Activated B cell treated with CpG ODN at 0.5 μM for 24 hours (primary cell): ENCODE measurements at regions of chr18 and their contacts with region 1.

Region 1: DNA sequence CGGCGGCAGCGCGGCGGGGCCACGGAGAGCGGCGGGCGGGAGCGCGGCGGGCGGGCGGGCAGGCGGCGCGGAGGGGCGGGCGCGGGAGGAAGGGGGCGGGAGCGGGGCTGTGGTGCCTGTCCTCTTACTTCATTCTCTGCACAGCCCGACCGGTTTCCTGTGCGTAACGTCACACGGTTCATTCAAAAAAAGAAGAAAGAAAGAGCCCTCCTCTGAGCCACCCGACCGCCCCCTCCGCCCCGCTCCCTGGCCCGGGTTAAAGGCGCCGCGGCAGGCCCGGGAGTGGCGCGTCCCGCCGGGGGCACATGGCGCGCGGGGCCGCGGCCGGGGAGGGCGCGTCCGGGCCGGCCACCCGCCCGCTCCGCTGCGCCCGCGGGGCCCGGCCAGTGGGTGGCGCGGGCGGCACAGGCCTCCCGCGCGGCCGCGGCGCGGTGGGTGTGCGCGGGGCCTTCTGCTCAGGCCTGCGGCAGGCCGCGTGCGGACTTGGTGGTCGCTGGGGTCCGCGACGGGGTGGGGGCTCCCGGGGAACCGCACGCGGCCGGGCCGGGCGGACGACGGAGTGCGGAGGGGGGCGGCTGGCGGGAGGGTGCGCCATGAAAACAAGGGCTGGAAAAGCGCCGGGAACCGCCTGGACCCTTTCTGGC is 599 bp upstream of the BCL2 start:
- DNase-seq: peak; percentile 78
- ATAC-seq: peak; percentile 77
- H3K4me3 Mint-ChIP-seq: peak overlapping the region; percentile 87
- H3K27ac Mint-ChIP-seq: peak overlapping the region; percentile 85
- H3K4me1 Mint-ChIP-seq: peaks cover 49% of the 10 kb centered on the region
- H3K27me3 Mint-ChIP-seq: no peaks in the 10 kb centered on the region
- CTCF ChIP-seq: no peak

Region 2: GRCh38 chr18:63016270-63016669 is 303.9 kb before region 1 on chr18:
- CTCF ChIA-PET with region 1: interaction called, 166 read pairs
- POLR2A ChIA-PET with region 1: interaction called, 15 read pairs
- intact Hi-C with region 1: loop called (anchors 1 kb)
- DNase-seq: no peak
- ATAC-seq: peak; percentile 75
- H3K4me3 Mint-ChIP-seq: no peak overlapping the region
- H3K27ac Mint-ChIP-seq: no peak overlapping the region
- H3K4me1 Mint-ChIP-seq: no peaks in the 10 kb centered on the region
- H3K27me3 Mint-ChIP-seq: peaks cover 13% of the 10 kb centered on the region
- CTCF ChIP-seq: no peak

Region 3: GRCh38 chr18:63131106-63131958 is 188.8 kb before region 1 on chr18:
- CTCF ChIA-PET with region 1: interaction called, 80 read pairs
- POLR2A ChIA-PET with region 1: interaction called, 46 read pairs
- intact Hi-C with region 1: loop called (anchors 1 kb)
- DNase-seq: no peak
- ATAC-seq: peak; percentile 65
- H3K4me3 Mint-ChIP-seq: no peak overlapping the region
- H3K27ac Mint-ChIP-seq: peak overlapping the region; percentile 70
- H3K4me1 Mint-ChIP-seq: peaks cover 35% of the 10 kb centered on the region
- H3K27me3 Mint-ChIP-seq: no peaks in the 10 kb centered on the region
- CTCF ChIP-seq: no peak

Region 4: GRCh38 chr18:63161761-63162195 is 158.4 kb before region 1 on chr18:
- CTCF ChIA-PET with region 1: interaction called, 33 read pairs
- POLR2A ChIA-PET with region 1: interaction called, 162 read pairs
- intact Hi-C with region 1: loop called (anchors 1 kb)
- DNase-seq: peak; percentile 48
- ATAC-seq: peak; percentile 62
- H3K4me3 Mint-ChIP-seq: peak overlapping the region; percentile 84
- H3K27ac Mint-ChIP-seq: peak overlapping the region; percentile 99
- H3K4me1 Mint-ChIP-seq: peaks cover 91% of the 10 kb centered on the region
- H3K27me3 Mint-ChIP-seq: no peaks in the 10 kb centered on the region
- CTCF ChIP-seq: no peak

Region 5: DNA sequence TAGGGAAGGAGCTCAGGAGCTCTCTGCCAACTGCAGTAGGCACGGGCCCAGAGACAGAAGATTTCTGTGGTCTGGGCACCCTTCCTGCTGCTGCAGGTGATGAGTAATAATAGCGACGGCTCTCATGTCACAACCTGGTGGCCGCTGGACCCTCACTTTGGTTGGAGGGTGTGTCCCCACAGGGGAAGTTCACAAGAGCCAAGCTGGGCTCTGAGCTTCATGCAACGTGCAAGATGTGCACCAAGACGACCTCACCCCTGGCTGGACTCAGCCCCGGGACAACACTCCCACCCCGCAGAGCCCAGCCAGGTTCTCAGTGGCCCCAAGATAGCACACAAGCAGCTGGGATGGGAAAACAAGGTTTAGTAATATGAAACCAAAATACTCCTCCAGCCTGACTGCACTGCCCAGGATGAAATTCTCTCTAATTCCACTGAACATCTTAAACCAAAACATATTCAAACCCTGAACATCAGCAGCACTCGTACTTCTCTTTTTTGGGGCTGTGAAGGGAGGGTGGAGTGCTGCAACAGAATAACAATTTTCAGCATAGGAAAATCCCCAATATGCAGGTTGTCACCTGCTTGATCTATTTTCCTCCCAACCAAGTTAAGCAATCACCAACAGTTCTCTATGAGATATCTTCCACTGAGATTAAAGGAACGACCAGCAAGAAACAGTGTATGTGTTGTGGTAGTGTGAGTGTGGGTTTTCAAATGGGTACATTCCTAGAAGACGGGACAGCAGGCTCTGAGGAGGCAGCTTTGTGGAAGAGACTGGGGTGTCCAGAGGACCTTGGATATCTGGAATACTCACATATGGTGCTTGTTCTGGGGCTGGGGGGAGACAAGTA is 27.1 kb before region 1 on chr18:
- CTCF ChIA-PET with region 1: interaction called, 29 read pairs
- POLR2A ChIA-PET with region 1: interaction called, 53 read pairs
- intact Hi-C with region 1: loop called (anchors 1 kb)
- DNase-seq: peak; percentile 46
- ATAC-seq: peak; percentile 80
- H3K4me3 Mint-ChIP-seq: peak overlapping the region; percentile 64
- H3K27ac Mint-ChIP-seq: no peak overlapping the region
- H3K4me1 Mint-ChIP-seq: peaks cover 21% of the 10 kb centered on the region
- H3K27me3 Mint-ChIP-seq: no peaks in the 10 kb centered on the region
- CTCF ChIP-seq: no peak

Region 6: DNA sequence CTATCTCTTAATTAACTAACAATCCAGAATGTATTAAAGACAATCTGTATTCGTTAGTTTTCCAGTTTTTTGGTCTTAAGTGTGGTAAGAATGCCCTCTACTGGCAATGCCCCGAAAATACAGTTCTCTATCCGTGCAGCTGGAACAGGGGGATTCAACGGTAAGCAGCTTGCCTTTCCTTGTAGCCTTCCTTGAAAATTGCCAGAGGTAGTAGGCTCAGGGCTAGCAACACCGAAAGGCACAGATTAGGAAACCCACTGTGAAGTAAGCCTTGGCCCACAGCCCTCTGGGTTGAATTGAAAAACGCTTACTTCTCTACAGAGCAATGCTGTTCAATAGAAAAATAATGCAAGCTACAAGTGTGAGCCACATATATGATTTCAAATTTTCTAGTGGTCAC is 119.2 kb after region 1 on chr18:
- CTCF ChIA-PET with region 1: interaction called, 9 read pairs
- POLR2A ChIA-PET with region 1: interaction called, 4 read pairs
- intact Hi-C with region 1: loop called (anchors 5 kb)
- DNase-seq: peak; percentile 16
- ATAC-seq: peak; percentile 79
- H3K4me3 Mint-ChIP-seq: no peak overlapping the region
- H3K27ac Mint-ChIP-seq: no peak overlapping the region
- H3K4me1 Mint-ChIP-seq: peaks cover 7% of the 10 kb centered on the region
- H3K27me3 Mint-ChIP-seq: peaks cover 7% of the 10 kb centered on the region
- CTCF ChIP-seq: peak; percentile 94